HepG2 (cell line): ENCODE measurements at regions of chr3 and their contacts with region 1.

Region 1: GRCh38 chr3:141331377-141332318 is 36.7 kb upstream of the ZBTB38 start:
- DNase-seq: peak; percentile 53
- ATAC-seq: peak; percentile 73
- H3K4me3 ChIP-seq: peak overlapping the region in 2 of 3 experiments; percentile 6 to 30; a peak in 3 of 6 replicates
- H3K27ac ChIP-seq: no peak overlapping the region
- H3K4me1 ChIP-seq: peaks cover 46% of the 10 kb centered on the region
- H3K27me3 ChIP-seq: no peaks in the 10 kb centered on the region
- CTCF ChIP-seq: no peak
- EP300 ChIP-seq: 0 out of 4 replicates have a peak, but pooled peaks of 1 of the 2 experiments have one; percentile 20
- POLR2A ChIP-seq: no peak
- RAD21 ChIP-seq: no peak

Region 2: DNA sequence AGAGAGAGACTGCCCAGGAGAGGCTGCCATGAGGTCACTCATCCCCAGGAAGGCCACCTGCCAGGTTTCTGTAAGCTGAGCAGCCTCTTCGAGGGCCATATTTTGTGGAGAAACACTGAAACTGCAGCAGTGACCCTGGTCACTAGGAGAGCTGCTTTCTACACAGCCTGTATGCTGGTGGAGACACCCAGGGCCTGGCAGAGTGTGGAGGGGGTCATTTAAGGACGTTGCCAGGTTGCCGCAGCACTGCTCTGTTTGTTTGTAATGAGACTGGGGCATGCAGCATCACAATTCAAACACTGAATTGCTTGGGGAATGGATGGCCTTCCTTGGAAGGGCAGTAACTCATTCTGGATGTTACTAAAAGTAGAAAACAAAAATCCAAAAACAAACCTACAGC is 758.6 kb before region 1 on chr3:
- CTCF ChIA-PET with region 1: no interaction called
- POLR2A ChIA-PET with region 1: no interaction called
- in situ Hi-C with region 1: no loop called
- intact Hi-C with region 1: no loop called
- DNase-seq: no peak
- ATAC-seq: peak; percentile 56
- H3K4me3 ChIP-seq: no peak overlapping the region
- H3K27ac ChIP-seq: no peak overlapping the region
- H3K4me1 ChIP-seq: no peaks in the 10 kb centered on the region
- H3K27me3 ChIP-seq: no peaks in the 10 kb centered on the region
- CTCF ChIP-seq: no peak
- EP300 ChIP-seq: no peak
- POLR2A ChIP-seq: no peak
- RAD21 ChIP-seq: no peak

Region 3: GRCh38 chr3:141174674-141175073 is 157.0 kb before region 1 on chr3:
- CTCF ChIA-PET with region 1: no interaction called
- POLR2A ChIA-PET with region 1: no interaction called
- in situ Hi-C with region 1: no loop called
- intact Hi-C with region 1: no loop called
- DNase-seq: no peak
- ATAC-seq: no peak
- H3K4me3 ChIP-seq: no peak overlapping the region
- H3K27ac ChIP-seq: no peak overlapping the region
- H3K4me1 ChIP-seq: no peaks in the 10 kb centered on the region
- H3K27me3 ChIP-seq: no peaks in the 10 kb centered on the region
- CTCF ChIP-seq: no peak
- EP300 ChIP-seq: no peak
- POLR2A ChIP-seq: no peak
- RAD21 ChIP-seq: no peak

Region 4: GRCh38 chr3:141311496-141312353 is 19.9 kb before region 1 on chr3:
- CTCF ChIA-PET with region 1: no interaction called
- POLR2A ChIA-PET with region 1: interaction called, 11 read pairs
- in situ Hi-C with region 1: no loop called
- intact Hi-C with region 1: no loop called
- DNase-seq: peak; percentile 96
- ATAC-seq: peak; percentile 92
- H3K4me3 ChIP-seq: peak overlapping the region; percentile 65 to 84 (median 83)
- H3K27ac ChIP-seq: peak overlapping the region; percentile 34
- H3K4me1 ChIP-seq: peaks cover 28% of the 10 kb centered on the region
- H3K27me3 ChIP-seq: no peaks in the 10 kb centered on the region
- CTCF ChIP-seq: peak; percentile 97
- EP300 ChIP-seq: peak in 1 of 2 experiments; percentile 45; a peak in 1 of 4 replicates
- POLR2A ChIP-seq: peak; percentile 71 to 95
- RAD21 ChIP-seq: peak; percentile 93

Region 5: GRCh38 chr3:142165194-142165593 is 833.5 kb after region 1 on chr3:
- CTCF ChIA-PET with region 1: no interaction called
- POLR2A ChIA-PET with region 1: no interaction called
- in situ Hi-C with region 1: no loop called
- intact Hi-C with region 1: no loop called
- DNase-seq: no peak
- ATAC-seq: no peak
- H3K4me3 ChIP-seq: no peak overlapping the region
- H3K27ac ChIP-seq: no peak overlapping the region
- H3K4me1 ChIP-seq: peaks cover 7% of the 10 kb centered on the region
- H3K27me3 ChIP-seq: no peaks in the 10 kb centered on the region
- CTCF ChIP-seq: no peak
- EP300 ChIP-seq: no peak
- POLR2A ChIP-seq: no peak
- RAD21 ChIP-seq: no peak